ENCODE measurements at regions of chr13 and their contacts with region 1.

Region 1: DNA sequence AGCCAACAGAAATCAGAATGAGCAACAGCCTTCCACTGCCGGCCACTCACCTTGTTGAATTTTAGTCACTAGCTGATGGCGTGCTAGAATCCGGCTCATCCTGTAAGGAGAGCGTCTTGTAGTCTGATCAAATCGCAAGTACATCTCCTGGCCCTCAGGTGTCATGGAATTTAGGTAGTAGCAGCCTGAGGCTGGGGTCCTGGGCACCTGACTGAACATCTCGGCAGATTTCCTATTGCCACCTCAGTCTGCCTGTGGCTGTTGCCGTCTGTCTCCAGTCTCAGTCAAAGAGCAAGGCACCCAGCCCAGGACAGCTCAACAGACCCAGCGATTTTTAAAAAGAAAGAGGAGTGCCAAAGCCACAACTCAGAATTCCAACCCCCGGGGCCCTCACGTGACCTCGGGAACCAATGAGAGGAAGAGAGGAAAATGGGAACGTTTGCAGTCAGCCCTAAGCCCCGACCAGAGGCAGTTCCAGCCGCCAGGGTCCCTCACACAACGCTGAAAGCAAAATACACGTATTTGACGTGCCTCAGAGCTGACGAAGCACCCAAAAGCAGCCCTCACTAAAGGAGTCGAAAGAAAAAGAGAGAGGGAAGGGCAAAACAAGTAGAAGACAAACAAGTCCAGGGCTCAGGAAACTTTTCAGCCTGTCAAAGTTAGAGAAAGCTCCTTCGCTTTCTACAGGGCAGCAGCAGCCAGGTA is at the start of gene STARD13:
- DNase-seq: peak; percentile 92 to 98
- H3K4me3 ChIP-seq: peak within 1 kb of the TSS; percentile 73 to 94
- H3K27ac ChIP-seq: peak within 1 kb of the TSS; percentile 88 to 97
- H3K4me1 ChIP-seq: peaks cover 10 to 26% of the 10 kb centered on the region in 2 donors
- H3K27me3 ChIP-seq: no peaks in the 10 kb centered on the region
- CTCF ChIP-seq: peak; percentile 34 to 52 (median 42)
- total RNA-seq, gene STARD13: 34.6 TPM

Region 2: GRCh38 chr13:33125821-33126570 is 159.6 kb before region 1 on chr13:
- intact Hi-C with region 1: loop called (anchors 5 kb)
- DNase-seq: peak in 1 of 2 donors; percentile 81
- H3K4me3 ChIP-seq: peak overlapping the region in 1 of 2 donors; percentile 23
- H3K27ac ChIP-seq: peak overlapping the region; percentile 73 to 74
- H3K4me1 ChIP-seq: peaks cover 11 to 20% of the 10 kb centered on the region in 2 donors
- H3K27me3 ChIP-seq: no peaks in the 10 kb centered on the region
- CTCF ChIP-seq: no peak

Region 3: DNA sequence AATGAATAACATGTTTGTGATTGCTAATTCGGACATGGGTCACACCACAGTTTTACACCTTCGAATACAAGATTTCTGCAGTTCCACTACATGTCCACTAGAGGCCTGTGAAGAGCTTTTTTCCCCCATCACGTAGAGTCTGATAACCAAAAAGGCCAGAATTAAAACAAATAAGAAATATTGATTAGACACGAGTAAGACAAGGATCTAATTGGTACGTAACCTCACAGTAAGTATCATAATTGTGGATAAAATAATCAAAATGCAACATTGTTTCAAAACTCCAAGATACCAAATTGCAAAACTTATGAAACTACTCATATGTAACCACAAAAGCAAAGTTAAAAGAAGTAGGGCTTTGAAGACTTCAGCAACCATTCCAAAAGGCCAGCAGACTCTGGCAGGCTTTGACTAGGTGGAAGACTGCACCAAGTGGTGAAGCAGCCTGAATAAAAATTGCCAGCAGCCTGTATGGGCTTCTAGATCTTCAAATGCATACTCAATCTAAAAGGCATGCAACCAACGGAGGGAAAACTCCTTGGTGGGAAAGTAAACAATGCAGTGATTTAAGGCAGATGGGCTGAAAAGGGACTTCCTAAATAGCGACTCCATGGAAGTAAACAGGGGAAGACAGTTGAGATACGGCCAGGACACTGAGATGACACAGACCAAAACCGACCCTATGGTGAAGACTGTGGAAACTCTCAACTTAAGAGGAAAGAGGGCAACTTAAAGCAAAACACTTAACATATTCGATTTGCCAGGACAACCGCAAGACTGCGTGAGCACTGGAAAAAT is 56.7 kb before region 1 on chr13:
- intact Hi-C with region 1: loop called (anchors 2 kb)
- DNase-seq: no peak
- H3K4me3 ChIP-seq: no peak overlapping the region
- H3K27ac ChIP-seq: no peak overlapping the region
- H3K4me1 ChIP-seq: peaks cover 0 to 19% of the 10 kb centered on the region in 2 donors
- H3K27me3 ChIP-seq: no peaks in the 10 kb centered on the region
- CTCF ChIP-seq: peak; percentile 74 to 91 (median 85)

Region 4: DNA sequence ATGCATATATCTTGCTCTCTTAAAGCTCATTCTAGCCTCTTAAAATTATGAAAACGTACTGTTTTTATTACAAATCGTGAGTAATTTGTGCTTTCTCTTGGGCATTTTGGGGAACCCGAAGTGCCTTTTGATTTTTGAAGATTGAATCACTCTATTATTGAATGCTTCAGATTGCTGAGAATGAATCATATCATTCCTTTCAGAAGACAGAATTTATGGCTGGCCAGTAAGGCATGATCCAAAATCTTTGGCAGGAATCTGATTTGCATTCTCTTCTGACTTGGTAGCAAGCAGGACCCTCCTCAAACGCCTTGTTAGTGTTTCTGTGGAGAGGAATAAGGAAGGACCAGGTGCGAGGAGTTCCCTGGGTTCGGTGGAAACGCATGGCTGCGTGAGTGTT is 49.6 kb before region 1 on chr13:
- intact Hi-C with region 1: loop called (anchors 1 kb)
- DNase-seq: no peak
- H3K4me3 ChIP-seq: no peak overlapping the region
- H3K27ac ChIP-seq: peak overlapping the region; percentile 62 to 72
- H3K4me1 ChIP-seq: peaks cover 2 to 29% of the 10 kb centered on the region in 2 donors
- H3K27me3 ChIP-seq: no peaks in the 10 kb centered on the region
- CTCF ChIP-seq: no peak

Region 5: GRCh38 chr13:33322543-33322809 is 36.9 kb after region 1 on chr13:
- intact Hi-C with region 1: loop called (anchors 1 kb)
- DNase-seq: peak in 1 of 2 donors; percentile 79
- H3K4me3 ChIP-seq: peak overlapping the region; percentile 16 to 56
- H3K27ac ChIP-seq: peak overlapping the region; percentile 62 to 63
- H3K4me1 ChIP-seq: peaks cover 4 to 26% of the 10 kb centered on the region in 2 donors
- H3K27me3 ChIP-seq: no peaks in the 10 kb centered on the region
- CTCF ChIP-seq: no peak

Region 6: GRCh38 chr13:33334831-33335230 is 49.3 kb after region 1 on chr13:
- intact Hi-C with region 1: no loop called
- DNase-seq: no peak
- H3K4me3 ChIP-seq: no peak overlapping the region
- H3K27ac ChIP-seq: no peak overlapping the region
- H3K4me1 ChIP-seq: no peaks in the 10 kb centered on the region
- H3K27me3 ChIP-seq: no peaks in the 10 kb centered on the region
- CTCF ChIP-seq: no peak

Region 7: DNA sequence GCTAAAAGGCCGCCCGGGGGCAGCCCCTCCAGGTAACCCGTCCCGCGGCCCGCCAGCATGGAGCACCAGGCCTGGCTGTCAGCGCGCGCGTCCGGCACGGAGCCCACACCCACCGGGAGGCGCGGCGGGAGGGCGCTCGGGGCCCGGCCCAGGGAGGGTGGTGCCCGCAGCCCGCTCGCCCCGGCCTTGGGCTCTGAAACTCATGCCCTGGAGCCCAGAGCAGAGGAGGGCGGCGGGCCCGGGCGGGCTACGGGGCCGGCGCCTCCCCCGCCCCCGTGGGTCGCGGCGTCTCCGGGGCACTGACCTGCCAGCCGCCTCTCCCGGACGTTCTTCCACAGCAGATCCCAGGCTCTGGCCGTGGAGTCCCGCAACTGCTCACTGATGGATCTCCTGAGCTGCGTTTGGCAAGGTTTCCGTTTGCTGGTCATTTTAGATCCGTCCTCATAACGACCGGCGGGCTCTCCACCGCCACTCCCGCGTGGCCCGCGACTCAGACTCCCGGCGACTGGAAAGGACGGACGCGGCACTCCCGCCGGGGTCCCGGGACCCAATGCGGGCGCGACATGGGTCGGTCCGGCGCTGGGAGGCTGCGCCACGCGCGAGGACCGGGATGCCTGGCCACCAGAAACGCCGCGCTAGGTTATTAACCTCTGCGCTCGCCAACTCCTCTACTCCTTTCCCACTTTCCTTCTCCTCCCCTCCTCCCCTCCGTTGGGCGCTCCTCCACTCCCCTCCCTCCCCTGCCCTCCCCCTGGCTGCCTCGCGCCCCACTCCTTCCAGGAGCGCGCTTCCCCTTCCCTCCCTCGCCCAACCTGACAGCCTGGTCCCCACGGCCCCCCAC is 64.6 kb after region 1 on chr13:
- intact Hi-C with region 1: loop called (anchors 2 kb)
- DNase-seq: peak in 1 of 2 donors; percentile 79
- H3K4me3 ChIP-seq: peak overlapping the region; percentile 64 to 96
- H3K27ac ChIP-seq: peak overlapping the region; percentile 90 to 94
- H3K4me1 ChIP-seq: peaks cover 5 to 12% of the 10 kb centered on the region in 2 donors
- H3K27me3 ChIP-seq: no peaks in the 10 kb centered on the region
- CTCF ChIP-seq: no peak

Region 8: DNA sequence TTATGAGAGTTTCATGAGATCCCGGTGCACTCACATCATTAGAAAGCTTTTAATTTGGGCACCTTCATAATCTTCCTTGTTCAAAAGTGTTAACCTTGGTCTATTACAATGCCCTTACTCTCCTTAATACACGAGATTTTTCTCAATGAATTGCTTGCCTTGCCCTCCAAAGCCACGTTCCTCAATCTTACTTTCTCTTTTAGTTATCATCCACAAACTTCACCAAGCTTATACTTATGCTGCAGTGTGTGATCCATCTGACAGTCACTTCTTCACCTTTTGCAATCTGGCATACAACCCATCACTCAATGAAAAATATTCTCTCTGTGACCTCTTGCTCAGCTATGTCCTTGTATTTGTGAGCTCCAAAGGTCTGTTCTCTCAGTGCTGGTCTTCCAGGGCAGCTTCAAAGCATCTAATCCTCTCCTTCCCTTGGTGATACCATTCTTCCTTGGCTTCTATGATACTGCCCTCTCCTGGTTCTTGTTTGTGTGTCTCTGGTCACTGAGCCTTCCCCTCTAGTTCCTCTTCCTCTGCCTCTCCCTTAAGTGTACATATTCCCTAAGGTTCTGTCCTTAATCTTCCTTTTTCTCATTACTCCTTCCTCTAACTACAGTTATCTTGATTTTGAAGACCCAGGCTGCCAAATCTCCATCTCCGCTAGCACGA is 202.1 kb after region 1 on chr13:
- intact Hi-C with region 1: loop called (anchors 5 kb)
- DNase-seq: peak in 1 of 2 donors; percentile 65
- H3K4me3 ChIP-seq: peak overlapping the region; percentile 29 to 56
- H3K27ac ChIP-seq: peak overlapping the region; percentile 35 to 60
- H3K4me1 ChIP-seq: peaks cover 0 to 13% of the 10 kb centered on the region in 2 donors
- H3K27me3 ChIP-seq: no peaks in the 10 kb centered on the region
- CTCF ChIP-seq: peak in 2 of 3 experiments; percentile 25 to 43